ENCODE measurements at regions of chr3 and their contacts with region 1.

Region 1: DNA sequence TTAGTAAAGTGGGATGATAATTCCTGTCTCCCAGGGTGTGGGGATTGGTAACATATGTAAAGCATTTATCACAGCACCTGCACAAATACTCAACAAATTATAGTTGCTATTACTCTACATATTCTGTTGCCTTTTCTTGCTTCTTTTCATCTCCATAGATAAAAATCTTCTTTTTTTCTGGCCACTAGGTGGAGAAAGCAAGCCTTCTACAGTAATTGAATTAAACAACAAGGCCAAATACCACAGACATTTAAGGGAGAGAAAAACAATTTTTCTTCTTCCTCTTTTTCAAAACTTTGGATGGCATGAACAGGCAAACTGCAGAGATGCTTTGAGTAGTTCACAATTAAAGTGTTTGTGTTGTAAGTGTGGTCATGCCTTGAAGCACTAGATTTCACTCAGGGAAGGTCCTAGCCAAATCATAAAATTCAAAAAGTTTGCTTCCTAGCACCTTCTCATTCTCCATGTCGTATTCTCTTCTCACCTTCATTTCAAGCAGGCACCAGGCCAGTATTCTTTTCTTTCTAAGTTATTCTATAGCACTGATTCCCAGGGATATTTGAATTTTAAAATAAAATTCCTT is 493.4 kb upstream of the TGFBR2 start:
- DNase-seq: no peak
- ATAC-seq: peak in 2 of 4 donors; percentile 30 to 57
- H3K4me3 ChIP-seq: no peak overlapping the region
- H3K27ac ChIP-seq: no peak overlapping the region
- H3K4me1 ChIP-seq: peaks cover 0 to 17% (median 6%) of the 10 kb centered on the region in 12 donors
- H3K27me3 ChIP-seq: no peaks in the 10 kb centered on the region
- CTCF ChIP-seq: peak; percentile 56 to 81 (median 70)
- POLR2A ChIP-seq: no peak

Region 2: DNA sequence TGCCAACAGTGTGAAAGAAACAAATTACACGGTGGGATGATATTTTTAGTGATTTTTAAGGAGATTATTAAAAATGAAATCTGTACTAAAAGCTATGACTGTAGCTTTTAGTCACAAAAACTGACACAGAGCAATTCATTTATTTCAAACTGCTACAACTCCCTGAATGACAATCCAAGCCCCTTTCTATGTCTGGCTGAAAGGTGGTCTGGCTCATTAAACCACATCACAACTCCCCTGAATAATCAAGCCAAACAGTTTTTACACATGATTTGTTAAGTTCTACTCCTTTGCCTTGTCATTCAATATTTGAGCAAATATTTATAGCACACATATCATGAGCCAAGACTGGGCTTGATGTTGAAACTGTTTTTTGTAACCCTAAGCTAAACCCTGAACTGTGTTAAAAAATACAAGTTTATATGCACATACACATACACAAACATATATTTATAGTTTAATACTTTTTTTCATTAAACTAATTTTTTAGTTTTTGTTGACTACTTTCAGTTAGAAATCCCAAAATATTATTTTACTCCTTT is 706.6 kb before region 1 on chr3:
- intact Hi-C with region 1: no loop called
- DNase-seq: no peak
- ATAC-seq: peak in 1 of 4 donors; percentile 31
- H3K4me3 ChIP-seq: no peak overlapping the region
- H3K27ac ChIP-seq: no peak overlapping the region
- H3K4me1 ChIP-seq: peaks cover 0 to 66% (median 34%) of the 10 kb centered on the region in 12 donors
- H3K27me3 ChIP-seq: no peaks in the 10 kb centered on the region
- CTCF ChIP-seq: no peak
- POLR2A ChIP-seq: no peak

Region 3: DNA sequence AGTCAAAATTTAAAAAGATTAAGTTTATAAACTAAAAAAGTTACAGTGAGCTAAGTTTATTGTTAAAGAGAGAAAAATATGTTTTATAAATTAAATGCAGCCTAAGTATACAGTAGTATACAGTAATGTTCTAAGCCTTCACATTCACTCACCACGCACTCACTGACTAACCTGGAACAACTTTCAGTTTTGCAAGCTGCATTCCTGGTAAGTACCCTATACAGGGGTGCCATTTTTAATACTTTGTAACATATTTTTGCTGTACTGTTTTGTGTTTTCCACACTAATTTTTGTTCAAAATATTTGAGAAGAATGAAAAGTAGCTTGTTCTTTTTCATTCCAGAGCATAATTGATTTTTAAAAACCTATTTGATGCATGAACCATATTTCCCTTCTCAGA is 307.2 kb before region 1 on chr3:
- intact Hi-C with region 1: no loop called
- DNase-seq: no peak
- ATAC-seq: no peak
- H3K4me3 ChIP-seq: no peak overlapping the region
- H3K27ac ChIP-seq: no peak overlapping the region
- H3K4me1 ChIP-seq: peaks cover 0 to 11% (median 0%) of the 10 kb centered on the region in 12 donors
- H3K27me3 ChIP-seq: no peaks in the 10 kb centered on the region
- CTCF ChIP-seq: no peak
- POLR2A ChIP-seq: no peak

Region 4: GRCh38 chr3:30042274-30042859 is 70.6 kb before region 1 on chr3:
- intact Hi-C with region 1: loop called in 2 of 10 experiments (anchors 5 kb)
- DNase-seq: peak in 4 of 5 donors; percentile 35 to 55 (median 50)
- ATAC-seq: peak in 3 of 4 donors; percentile 46 to 78 (median 66)
- H3K4me3 ChIP-seq: no peak overlapping the region
- H3K27ac ChIP-seq: no peak overlapping the region
- H3K4me1 ChIP-seq: peaks cover 0 to 21% (median 1%) of the 10 kb centered on the region in 12 donors
- H3K27me3 ChIP-seq: no peaks in the 10 kb centered on the region
- CTCF ChIP-seq: peak; percentile 67 to 85 (median 78)
- POLR2A ChIP-seq: no peak